ENCODE measurements at regions of chr18 and their contacts with region 1.

Region 1: DNA sequence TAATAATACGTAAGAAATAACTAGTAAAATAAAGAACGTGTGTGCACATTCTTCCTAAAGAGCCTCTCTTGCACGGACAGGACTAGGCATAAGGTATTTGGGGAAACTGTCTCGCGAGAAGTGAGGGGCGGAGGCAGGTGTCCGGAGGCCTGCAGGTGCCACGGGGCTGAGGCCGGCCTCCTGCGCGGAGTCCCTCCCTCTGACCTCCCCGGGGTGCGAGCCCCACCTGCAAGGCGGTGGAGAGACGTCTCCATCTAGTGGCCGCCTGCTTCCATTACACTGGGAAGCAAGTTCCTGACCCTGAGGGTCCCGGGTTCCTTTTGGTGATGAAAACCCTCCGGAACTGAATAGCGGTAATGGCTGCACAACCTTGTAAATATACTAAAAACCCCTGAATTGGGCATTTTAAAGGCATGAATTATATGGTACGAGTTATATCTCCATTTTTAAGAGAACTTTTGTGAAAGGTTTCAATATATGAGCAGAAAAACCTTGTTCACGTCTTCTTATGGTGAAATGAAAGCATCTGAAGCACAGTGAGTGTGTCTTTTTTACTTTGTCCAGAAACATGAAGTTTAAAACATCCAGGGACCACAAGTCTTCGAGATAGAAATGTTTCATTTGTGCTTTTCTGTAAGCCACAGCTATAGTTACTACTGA is 35.5 kb upstream of the CTDP1 start:
- DNase-seq: peak; percentile 73 to 90 (median 86)
- ATAC-seq: peak; percentile 95
- H3K4me3 ChIP-seq: no peak overlapping the region
- H3K27ac ChIP-seq: no peak overlapping the region
- H3K4me1 ChIP-seq: 0 out of 5 replicates have a peak, but pooled peaks cover 0 to 6% of the 10 kb centered on the region in 2 experiments
- H3K27me3 ChIP-seq: peaks cover 2 to 21% of the 10 kb centered on the region in 2 experiments; a peak in 3 of 5 replicates
- CTCF ChIP-seq: peak; percentile 77 to 79 (median 79)
- EP300 ChIP-seq: no peak
- POLR2A ChIP-seq: no peak
- RAD21 ChIP-seq: peak; percentile 84 to 90

Region 2: GRCh38 chr18:79378542-79379250 is 265.4 kb before region 1 on chr18:
- CTCF ChIA-PET with region 1: interaction called, 12 read pairs
- POLR2A ChIA-PET with region 1: interaction called, 3 read pairs
- in situ Hi-C with region 1: loop called (anchors 5 kb)
- intact Hi-C with region 1: loop called (anchors 1 kb)
- DNase-seq: peak; percentile 51 to 58 (median 54)
- ATAC-seq: peak; percentile 79
- H3K4me3 ChIP-seq: no peak overlapping the region
- H3K27ac ChIP-seq: no peak overlapping the region
- H3K4me1 ChIP-seq: peaks cover 0 to 15% of the 10 kb centered on the region in 2 experiments; a peak in 2 of 5 replicates
- H3K27me3 ChIP-seq: no peaks in the 10 kb centered on the region; a peak in 1 of 5 replicates
- CTCF ChIP-seq: peak; percentile 63 to 74 (median 69)
- EP300 ChIP-seq: no peak
- POLR2A ChIP-seq: no peak
- RAD21 ChIP-seq: peak; percentile 34 to 63

Measured in K562 (cell line).